CD4-positive, alpha-beta memory T cell (primary cell): ENCODE measurements at regions of chr18 and their contacts with region 1.

Region 1: GRCh38 chr18:48928787-48929186 is 22.0 kb downstream of the SMAD7 start:
- DNase-seq: peak; percentile 72 to 89 (median 76)
- H3K4me3 ChIP-seq: peak overlapping the region; percentile 13 to 15
- H3K4me3 Mint-ChIP-seq: peak overlapping the region; percentile 50 to 94 (median 74)
- H3K27ac ChIP-seq: peak overlapping the region; percentile 3
- H3K27ac Mint-ChIP-seq: peak overlapping the region; percentile 86 to 97 (median 95)
- H3K4me1 ChIP-seq: peaks cover 97% of the 10 kb centered on the region
- H3K4me1 Mint-ChIP-seq: peaks cover 66 to 99% (median 84%) of the 10 kb centered on the region in 4 donors
- H3K27me3 ChIP-seq: no peaks in the 10 kb centered on the region
- H3K27me3 Mint-ChIP-seq: peaks cover 0 to 1% of the 10 kb centered on the region in 2 donors

Region 2: GRCh38 chr18:48842259-48843061 is 86.3 kb before region 1 on chr18:
- CTCF ChIA-PET with region 1: no interaction called
- POLR2A ChIA-PET with region 1: no interaction called
- intact Hi-C with region 1: loop called (anchors 5 kb)
- DNase-seq: peak; percentile 77 to 83 (median 78)
- H3K4me3 ChIP-seq: peak overlapping the region in 1 of 2 donors; percentile 34
- H3K4me3 Mint-ChIP-seq: peak overlapping the region; percentile 43 to 87 (median 74)
- H3K27ac ChIP-seq: peak overlapping the region; percentile 62
- H3K27ac Mint-ChIP-seq: peak overlapping the region; percentile 94 to 99 (median 97)
- H3K4me1 ChIP-seq: peaks cover 85% of the 10 kb centered on the region
- H3K4me1 Mint-ChIP-seq: peaks cover 68 to 84% (median 77%) of the 10 kb centered on the region in 4 donors
- H3K27me3 ChIP-seq: no peaks in the 10 kb centered on the region
- H3K27me3 Mint-ChIP-seq: no peaks in the 10 kb centered on the region

Region 3: GRCh38 chr18:48975649-48976204 is 46.9 kb after region 1 on chr18:
- CTCF ChIA-PET with region 1: interaction called, 3 read pairs
- POLR2A ChIA-PET with region 1: no interaction called
- intact Hi-C with region 1: loop called (anchors 10 kb)
- DNase-seq: peak; percentile 47 to 58 (median 49)
- H3K4me3 ChIP-seq: peak overlapping the region in 1 of 2 donors; percentile 57
- H3K4me3 Mint-ChIP-seq: peak overlapping the region in 2 of 8 donors; percentile 36
- H3K27ac ChIP-seq: peak overlapping the region; percentile 6
- H3K27ac Mint-ChIP-seq: no peak overlapping the region
- H3K4me1 ChIP-seq: peaks cover 4% of the 10 kb centered on the region
- H3K4me1 Mint-ChIP-seq: peaks cover 7 to 15% (median 11%) of the 10 kb centered on the region in 4 donors
- H3K27me3 ChIP-seq: no peaks in the 10 kb centered on the region
- H3K27me3 Mint-ChIP-seq: peaks cover 6 to 9% of the 10 kb centered on the region in 2 donors